ENCODE measurements at regions of chr22 and their contacts with region 1.

Region 1: DNA sequence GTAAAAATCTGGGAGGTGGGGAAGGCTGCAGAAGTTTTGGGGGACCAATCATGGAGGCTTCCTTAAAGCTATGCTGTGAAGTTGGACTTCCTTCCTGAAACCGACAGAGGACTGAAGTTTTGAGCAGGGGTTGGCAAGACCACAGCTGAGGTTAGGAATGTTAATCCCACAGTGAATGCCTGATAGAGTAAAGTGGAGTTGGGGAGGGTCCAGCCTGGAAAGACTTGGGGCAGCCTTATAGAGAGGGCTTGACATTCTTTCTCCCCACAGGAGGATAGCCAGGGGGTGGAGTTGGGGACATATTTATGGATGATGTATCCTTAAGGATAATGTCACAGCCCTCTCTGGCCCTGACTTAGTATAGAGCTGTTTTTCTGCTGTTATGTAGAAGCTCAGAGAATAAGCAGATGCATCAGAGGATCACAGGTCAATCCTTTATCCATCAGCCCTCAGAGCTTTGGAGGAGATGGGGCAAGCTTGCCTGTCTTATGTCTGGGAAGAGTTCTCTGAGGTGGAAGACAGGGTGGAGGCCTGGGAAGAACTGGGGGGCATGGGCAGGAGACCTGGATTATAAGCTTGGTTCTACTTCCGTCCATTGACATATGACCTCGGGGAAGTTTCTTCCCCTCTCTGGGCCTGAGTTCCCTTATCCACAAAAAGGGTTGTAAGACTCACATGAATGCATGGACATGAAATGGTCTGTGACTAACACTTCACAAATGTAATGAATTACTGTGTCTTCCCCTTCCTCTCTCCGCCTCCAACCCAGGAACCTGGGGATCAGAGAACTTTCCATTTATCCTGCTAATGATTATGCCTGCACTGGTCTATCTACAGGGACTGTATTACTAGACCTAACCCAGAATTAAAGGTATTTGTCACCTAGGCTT is 317.8 kb downstream of the MIAT start:
- DNase-seq: no peak
- H3K4me3 ChIP-seq: no peak overlapping the region
- H3K27ac ChIP-seq: no peak overlapping the region
- H3K4me1 ChIP-seq: no peaks in the 10 kb centered on the region
- H3K27me3 ChIP-seq: peaks cover 75% of the 10 kb centered on the region
- CTCF ChIP-seq: no peak

Region 2: GRCh38 chr22:26903030-26903856 is 71.9 kb before region 1 on chr22:
- CTCF ChIA-PET with region 1: no interaction called
- POLR2A ChIA-PET with region 1: no interaction called
- intact Hi-C with region 1: no loop called
- DNase-seq: no peak
- H3K4me3 ChIP-seq: no peak overlapping the region
- H3K27ac ChIP-seq: no peak overlapping the region
- H3K4me1 ChIP-seq: no peaks in the 10 kb centered on the region
- H3K27me3 ChIP-seq: peaks cover 12% of the 10 kb centered on the region
- CTCF ChIP-seq: no peak

Region 3: GRCh38 chr22:27348634-27349033 is 373.5 kb after region 1 on chr22:
- CTCF ChIA-PET with region 1: no interaction called
- POLR2A ChIA-PET with region 1: interaction called, 12 read pairs
- intact Hi-C with region 1: no loop called
- DNase-seq: no peak
- H3K4me3 ChIP-seq: no peak overlapping the region
- H3K27ac ChIP-seq: no peak overlapping the region
- H3K4me1 ChIP-seq: peaks cover 9% of the 10 kb centered on the region; the same call in 1 of the 2 replicates
- H3K27me3 ChIP-seq: no peaks in the 10 kb centered on the region
- CTCF ChIP-seq: no peak

Measured in PC-9 (cell line).